ENCODE measurements at regions of chr2 and their contacts with region 1.

Region 1: GRCh38 chr2:27587025-27587424 is 4.2 kb downstream of the ZNF512 start:
- DNase-seq: no peak
- ATAC-seq: no peak
- H3K4me3 ChIP-seq: no peak overlapping the region
- H3K27ac ChIP-seq: no peak overlapping the region
- H3K4me1 ChIP-seq: peaks cover 3% of the 10 kb centered on the region; the same call in 1 of the 2 replicates
- H3K27me3 ChIP-seq: no peaks in the 10 kb centered on the region
- CTCF ChIP-seq: no peak

Region 2: GRCh38 chr2:27308359-27308881 is 278.6 kb before region 1 on chr2 and contains the start of gene UCN:
- CTCF ChIA-PET with region 1: no interaction called
- POLR2A ChIA-PET with region 1: no interaction called
- in situ Hi-C with region 1: no loop called
- intact Hi-C with region 1: no loop called
- DNase-seq: no peak
- ATAC-seq: no peak
- H3K4me3 ChIP-seq: no peak within 1 kb of the TSS
- H3K27ac ChIP-seq: no peak within 1 kb of the TSS
- H3K4me1 ChIP-seq: no peaks in the 10 kb centered on the region
- H3K27me3 ChIP-seq: no peaks in the 10 kb centered on the region
- CTCF ChIP-seq: no peak
- total RNA-seq, gene UCN: 4.4 TPM

Region 3: GRCh38 chr2:27622921-27623384 is 35.9 kb after region 1 on chr2:
- CTCF ChIA-PET with region 1: interaction called, 11 read pairs
- POLR2A ChIA-PET with region 1: interaction called, 3 read pairs
- in situ Hi-C with region 1: loop called (anchors 5 kb)
- intact Hi-C with region 1: no loop called
- DNase-seq: no peak
- ATAC-seq: no peak
- H3K4me3 ChIP-seq: no peak overlapping the region
- H3K27ac ChIP-seq: no peak overlapping the region
- H3K4me1 ChIP-seq: peaks cover 3% of the 10 kb centered on the region
- H3K27me3 ChIP-seq: no peaks in the 10 kb centered on the region
- CTCF ChIP-seq: no peak

Region 4: DNA sequence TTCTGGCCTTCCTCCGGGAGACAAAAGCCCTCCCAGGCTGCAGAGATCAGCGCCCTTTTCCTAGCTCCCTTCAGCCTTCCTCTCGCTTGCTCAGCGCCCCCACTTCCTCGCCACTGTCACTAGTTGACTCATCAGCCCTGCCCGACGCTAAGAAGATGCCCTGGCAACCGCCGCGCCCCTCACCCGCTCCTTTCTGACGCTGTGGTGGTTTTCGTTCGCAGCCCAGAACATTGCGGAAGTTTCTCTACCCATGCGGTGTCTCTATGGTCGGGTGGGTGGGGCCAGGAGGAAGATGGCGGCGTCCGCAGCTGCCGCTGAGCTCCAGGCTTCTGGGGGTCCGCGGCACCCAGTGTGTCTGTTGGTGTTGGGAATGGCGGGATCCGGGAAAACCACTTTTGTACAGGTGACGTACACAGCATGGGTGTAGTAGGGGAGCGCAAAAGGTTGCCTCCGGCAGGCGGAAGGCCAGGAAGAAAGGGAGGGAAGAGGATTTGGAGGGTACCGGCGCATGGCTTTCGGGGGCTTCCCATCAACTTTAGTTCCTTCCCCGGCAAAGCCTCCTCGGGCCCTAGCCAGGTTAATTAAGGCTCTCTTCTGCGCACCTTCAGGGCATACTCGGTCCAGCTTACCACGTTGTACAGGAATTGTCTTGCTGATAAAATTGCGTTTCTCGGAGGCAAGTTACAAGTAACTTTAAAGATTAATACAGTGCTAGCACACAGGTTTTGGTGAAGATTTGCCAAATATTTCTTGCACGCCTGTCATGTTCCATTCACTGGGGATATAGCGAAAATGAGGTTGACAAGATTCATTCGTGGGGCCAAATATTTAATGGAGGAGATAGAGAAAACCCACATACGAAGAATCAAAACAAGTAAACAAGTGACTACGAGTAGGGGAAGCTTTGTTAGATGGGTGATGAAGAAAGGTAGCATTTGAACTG is 42.0 kb after region 1 on chr2 and contains the starts of genes CCDC121 and GPN1:
- CTCF ChIA-PET with region 1: interaction called, 11 read pairs
- POLR2A ChIA-PET with region 1: interaction called, 3 read pairs
- in situ Hi-C with region 1: loop called (anchors 5 kb)
- intact Hi-C with region 1: no loop called
- DNase-seq: peak; percentile 53
- ATAC-seq: peak; percentile 99
- H3K4me3 ChIP-seq: peak within 1 kb of the TSS; percentile 77 to 100
- H3K27ac ChIP-seq: peak within 1 kb of the TSS; percentile 92
- H3K4me1 ChIP-seq: peaks cover 8% of the 10 kb centered on the region
- H3K27me3 ChIP-seq: no peaks in the 10 kb centered on the region
- CTCF ChIP-seq: no peak
- total RNA-seq, gene CCDC121: 5.9 TPM
- total RNA-seq, gene GPN1: 37.2 TPM